ENCODE measurements at regions of chr13 and their contacts with region 1.

Region 1: DNA sequence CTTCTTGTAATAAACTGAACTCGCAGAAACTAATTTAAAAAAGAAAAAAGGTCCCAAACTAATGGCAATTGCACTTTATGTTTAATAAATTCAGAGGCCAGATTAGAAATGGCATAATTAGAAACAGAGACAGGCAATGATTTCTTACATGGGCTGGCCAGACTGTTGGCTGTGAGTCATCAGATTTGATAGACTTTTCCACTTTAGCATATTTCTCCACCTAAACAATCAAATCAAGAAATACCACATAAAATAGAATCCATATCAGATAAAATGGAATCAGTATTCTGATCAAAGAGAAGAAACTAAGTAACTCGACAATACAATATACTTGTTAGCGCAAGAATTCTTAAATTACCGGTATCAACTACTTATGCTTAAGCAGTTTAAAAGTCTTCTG is 29.0 kb downstream of the EXOSC8 start:
- DNase-seq: peak; percentile 62
- H3K4me3 ChIP-seq: no peak overlapping the region
- H3K27ac ChIP-seq: no peak overlapping the region; the same call in 1 of the 2 replicates
- H3K4me1 ChIP-seq: peaks cover 30% of the 10 kb centered on the region
- H3K27me3 ChIP-seq: no peaks in the 10 kb centered on the region

Region 2: GRCh38 chr13:35961461-35962220 is 1068.0 kb before region 1 on chr13:
- in situ Hi-C with region 1: no loop called
- DNase-seq: peak; percentile 44
- H3K4me3 ChIP-seq: no peak overlapping the region
- H3K27ac ChIP-seq: no peak overlapping the region
- H3K4me1 ChIP-seq: peaks cover 24% of the 10 kb centered on the region
- H3K27me3 ChIP-seq: no peaks in the 10 kb centered on the region

Region 3: GRCh38 chr13:38349390-38350113 is 1319.9 kb after region 1 on chr13 and contains the start of gene UFM1:
- in situ Hi-C with region 1: loop called (anchors 25 kb)
- DNase-seq: peak; percentile 96
- H3K4me3 ChIP-seq: peak within 1 kb of the TSS; percentile 83
- H3K27ac ChIP-seq: peak within 1 kb of the TSS; percentile 95
- H3K4me1 ChIP-seq: peaks cover 22% of the 10 kb centered on the region
- H3K27me3 ChIP-seq: no peaks in the 10 kb centered on the region
- total RNA-seq, gene UFM1: 125 and 131 TPM in 2 replicates

Measured in GM23248 (cell line).